Mammary epithelial cell (primary cell): ENCODE measurements at regions of chr12 and their contacts with region 1.

Region 1: GRCh38 chr12:66169221-66170170 is at the start of gene TMBIM4:
- DNase-seq: peak; percentile 92
- H3K4me3 ChIP-seq: peak within 1 kb of the TSS; percentile 85 to 97 (median 93)
- H3K27ac ChIP-seq: peak within 1 kb of the TSS; percentile 90
- H3K4me1 ChIP-seq: peaks cover 3% of the 10 kb centered on the region
- H3K27me3 ChIP-seq: no peaks in the 10 kb centered on the region
- CTCF ChIP-seq: peak; percentile 28 to 54
- total RNA-seq, gene TMBIM4: 57.7 to 76.2 TPM

Region 2: GRCh38 chr12:66139328-66139727 is 30.2 kb before region 1 on chr12:
- CTCF ChIA-PET with region 1: no interaction called
- dilution Hi-C with region 1: no loop called
- in situ Hi-C with region 1: no loop called
- intact Hi-C with region 1: loop called (anchors 1 kb)
- DNase-seq: no peak
- H3K4me3 ChIP-seq: no peak overlapping the region
- H3K27ac ChIP-seq: no peak overlapping the region
- H3K4me1 ChIP-seq: peaks cover 6% of the 10 kb centered on the region
- H3K27me3 ChIP-seq: no peaks in the 10 kb centered on the region
- CTCF ChIP-seq: no peak

Region 3: DNA sequence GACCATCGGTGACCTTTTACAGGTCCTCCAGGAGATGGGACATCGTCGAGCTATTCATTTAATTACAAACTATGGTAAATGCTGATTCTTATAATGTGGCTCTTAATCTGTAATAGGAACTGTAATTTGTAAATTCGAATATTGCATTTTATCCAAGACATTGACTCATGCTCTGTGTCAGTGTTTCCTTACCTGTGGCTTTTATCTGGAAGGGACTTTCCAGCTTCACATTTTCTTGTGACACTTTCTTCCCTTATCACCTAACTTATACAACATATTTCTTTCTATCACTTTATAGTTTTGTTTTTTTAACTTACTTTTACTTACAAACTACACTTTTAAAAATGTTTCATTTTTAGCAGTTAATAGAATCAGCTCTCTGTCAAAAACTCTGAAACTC is 34.3 kb after region 1 on chr12:
- CTCF ChIA-PET with region 1: no interaction called
- dilution Hi-C with region 1: no loop called
- in situ Hi-C with region 1: no loop called
- intact Hi-C with region 1: no loop called
- DNase-seq: peak; percentile 21
- H3K4me3 ChIP-seq: no peak overlapping the region
- H3K27ac ChIP-seq: no peak overlapping the region
- H3K4me1 ChIP-seq: no peaks in the 10 kb centered on the region
- H3K27me3 ChIP-seq: no peaks in the 10 kb centered on the region
- CTCF ChIP-seq: no peak

Region 4: DNA sequence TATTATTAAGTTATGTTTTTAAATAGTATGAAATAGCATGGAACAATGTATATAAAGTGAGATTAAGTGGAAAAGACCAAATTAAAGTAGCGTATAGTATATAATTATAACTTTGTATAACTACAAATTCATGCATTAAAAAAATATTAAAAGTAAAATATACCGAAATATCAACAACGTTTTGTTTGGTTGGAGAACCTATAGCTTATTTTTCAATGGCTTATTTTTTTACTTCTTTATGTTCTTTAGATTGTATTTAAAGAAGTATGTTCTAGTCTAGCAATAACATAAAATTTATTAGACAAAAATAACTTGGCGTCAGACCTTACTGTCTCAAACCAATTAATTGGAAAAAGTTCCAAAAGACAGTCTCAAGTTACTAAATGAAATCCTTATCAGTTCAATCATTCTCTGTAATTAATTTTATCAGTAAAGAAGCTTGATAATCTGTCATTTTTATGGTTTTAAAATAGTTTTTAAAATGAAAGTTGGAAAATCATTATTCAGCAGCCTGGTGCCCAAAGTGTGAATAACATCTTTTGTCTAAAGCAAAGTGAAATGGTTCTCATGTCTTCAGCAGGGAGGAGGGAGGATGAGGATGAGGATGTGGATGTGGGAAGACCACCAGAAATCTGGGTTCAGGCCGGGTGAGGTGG is 66.3 kb after region 1 on chr12:
- CTCF ChIA-PET with region 1: no interaction called
- dilution Hi-C with region 1: no loop called
- in situ Hi-C with region 1: no loop called
- intact Hi-C with region 1: loop called (anchors 5 kb)
- DNase-seq: no peak
- H3K4me3 ChIP-seq: peak overlapping the region; percentile 40 to 64 (median 61)
- H3K27ac ChIP-seq: no peak overlapping the region
- H3K4me1 ChIP-seq: no peaks in the 10 kb centered on the region
- H3K27me3 ChIP-seq: peaks cover 5% of the 10 kb centered on the region
- CTCF ChIP-seq: peak; percentile 14 to 36

Region 5: GRCh38 chr12:66500841-66501240 is 331.3 kb after region 1 on chr12:
- CTCF ChIA-PET with region 1: no interaction called
- dilution Hi-C with region 1: no loop called
- in situ Hi-C with region 1: no loop called
- intact Hi-C with region 1: no loop called
- DNase-seq: no peak
- H3K4me3 ChIP-seq: no peak overlapping the region
- H3K27ac ChIP-seq: no peak overlapping the region
- H3K4me1 ChIP-seq: peaks cover 6% of the 10 kb centered on the region
- H3K27me3 ChIP-seq: no peaks in the 10 kb centered on the region
- CTCF ChIP-seq: no peak